ENCODE measurements at regions of chr6 and their contacts with region 1.

Region 1: GRCh38 chr6:28940858-28941680 is 17.3 kb upstream of the TRIM27 start:
- DNase-seq: peak; percentile 73
- H3K4me3 Mint-ChIP-seq: peak overlapping the region; percentile 95
- H3K27ac Mint-ChIP-seq: peak overlapping the region; percentile 97
- H3K4me1 Mint-ChIP-seq: peaks cover 59% of the 10 kb centered on the region
- H3K27me3 Mint-ChIP-seq: peaks cover 10% of the 10 kb centered on the region

Region 2: DNA sequence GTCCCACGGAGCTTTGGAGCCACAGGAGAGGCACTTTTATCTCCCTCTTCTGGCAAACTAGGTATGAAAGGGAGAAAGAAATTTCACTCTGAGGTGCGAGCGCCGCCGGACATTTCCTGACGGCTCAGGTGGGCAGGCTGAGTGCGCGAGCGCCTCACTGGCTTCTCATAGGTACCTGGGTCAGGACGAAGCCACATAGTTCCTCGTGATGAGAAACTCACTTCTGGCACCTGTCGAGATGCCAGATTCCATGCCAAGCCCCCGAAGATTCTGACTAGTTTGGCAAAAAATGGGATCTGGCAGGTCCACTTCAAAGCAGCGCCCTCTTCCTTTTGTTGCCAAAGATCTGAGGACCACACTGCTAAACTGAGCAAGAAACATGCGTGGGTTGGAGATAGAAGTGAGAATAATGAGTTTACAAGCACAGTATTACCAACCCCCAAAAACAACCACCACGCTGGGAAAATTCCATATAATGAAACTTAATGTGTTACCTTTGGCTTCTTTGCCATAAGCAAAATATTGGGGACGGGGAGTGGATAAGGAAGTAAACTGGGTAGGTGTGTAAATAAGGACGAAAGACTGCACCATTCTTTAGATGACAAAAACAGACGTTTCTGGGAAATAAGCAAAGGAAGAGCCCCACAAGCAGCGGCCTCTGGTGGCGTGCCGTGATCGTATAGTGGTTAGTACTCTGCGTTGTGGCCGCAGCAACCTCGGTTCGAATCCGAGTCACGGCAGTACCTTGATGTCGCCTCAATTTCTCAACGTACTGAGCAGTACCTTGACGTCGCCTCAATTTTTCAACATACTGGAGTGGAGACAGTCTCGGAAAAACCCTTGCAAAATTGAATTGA is 1783.4 kb before region 1 on chr6:
- intact Hi-C with region 1: loop called (anchors 5 kb)
- DNase-seq: peak; percentile 70
- H3K4me3 Mint-ChIP-seq: peak overlapping the region; percentile 77
- H3K27ac Mint-ChIP-seq: peak overlapping the region; percentile 80
- H3K4me1 Mint-ChIP-seq: peaks cover 47% of the 10 kb centered on the region
- H3K27me3 Mint-ChIP-seq: peaks cover 2% of the 10 kb centered on the region

Region 3: DNA sequence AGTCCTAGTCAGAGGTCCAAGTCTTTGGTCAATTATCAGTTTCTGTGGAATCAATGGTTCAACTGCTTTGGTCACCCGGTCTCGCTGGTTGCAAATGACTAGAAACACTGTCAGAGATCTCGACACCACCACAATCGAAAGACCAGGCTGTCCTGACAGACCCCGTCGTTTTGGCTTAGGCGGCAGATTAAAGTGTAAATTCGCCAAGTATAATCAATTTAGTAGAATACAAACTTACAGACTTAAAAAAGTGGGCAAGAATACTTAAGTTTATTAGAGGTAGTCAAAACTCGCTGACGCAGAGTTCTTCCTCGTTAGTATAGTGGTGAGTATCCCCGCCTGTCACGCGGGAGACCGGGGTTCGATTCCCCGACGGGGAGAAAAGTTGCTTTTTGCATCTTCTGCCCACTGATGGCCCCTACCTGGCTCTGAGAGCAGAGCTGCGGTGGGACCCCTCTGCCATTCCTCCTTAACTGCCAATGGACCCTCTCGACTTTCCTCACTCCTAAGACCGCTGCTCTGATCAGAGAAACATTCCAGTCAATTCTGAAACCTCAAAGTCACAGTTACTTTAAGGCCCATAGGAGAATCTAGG is 1437.5 kb before region 1 on chr6:
- intact Hi-C with region 1: loop called (anchors 5 kb)
- DNase-seq: peak; percentile 60
- H3K4me3 Mint-ChIP-seq: peak overlapping the region; percentile 90
- H3K27ac Mint-ChIP-seq: peak overlapping the region; percentile 82
- H3K4me1 Mint-ChIP-seq: peaks cover 32% of the 10 kb centered on the region
- H3K27me3 Mint-ChIP-seq: peaks cover 42% of the 10 kb centered on the region

Region 4: GRCh38 chr6:27902335-27903314 is 1038.4 kb before region 1 on chr6:
- intact Hi-C with region 1: loop called (anchors 1 kb)
- DNase-seq: peak; percentile 77
- H3K4me3 Mint-ChIP-seq: peak overlapping the region; percentile 79
- H3K27ac Mint-ChIP-seq: peak overlapping the region; percentile 95
- H3K4me1 Mint-ChIP-seq: peaks cover 24% of the 10 kb centered on the region
- H3K27me3 Mint-ChIP-seq: peaks cover 26% of the 10 kb centered on the region

Region 5: DNA sequence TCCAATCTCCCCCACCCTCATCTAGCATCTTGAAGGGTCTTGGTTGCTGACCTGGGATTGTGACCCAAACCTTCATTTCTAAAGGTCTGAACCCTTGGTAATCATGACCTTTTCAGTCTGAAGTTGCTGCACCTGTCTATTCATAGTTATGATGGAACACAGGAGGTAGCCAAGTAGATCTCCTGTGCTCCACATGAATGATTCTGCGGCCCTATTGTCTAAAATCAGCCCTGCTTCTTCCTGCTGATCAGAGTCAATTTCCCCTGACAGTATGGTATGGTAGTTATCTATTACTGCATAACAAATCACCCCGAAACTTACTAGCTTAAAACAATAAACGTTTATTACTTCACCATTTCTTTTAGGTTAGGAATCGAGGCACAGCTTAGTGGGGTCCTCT is 975.0 kb before region 1 on chr6:
- intact Hi-C with region 1: no loop called
- DNase-seq: no peak
- H3K4me3 Mint-ChIP-seq: no peak overlapping the region
- H3K27ac Mint-ChIP-seq: no peak overlapping the region
- H3K4me1 Mint-ChIP-seq: no peaks in the 10 kb centered on the region
- H3K27me3 Mint-ChIP-seq: peaks cover 4% of the 10 kb centered on the region

Region 6: DNA sequence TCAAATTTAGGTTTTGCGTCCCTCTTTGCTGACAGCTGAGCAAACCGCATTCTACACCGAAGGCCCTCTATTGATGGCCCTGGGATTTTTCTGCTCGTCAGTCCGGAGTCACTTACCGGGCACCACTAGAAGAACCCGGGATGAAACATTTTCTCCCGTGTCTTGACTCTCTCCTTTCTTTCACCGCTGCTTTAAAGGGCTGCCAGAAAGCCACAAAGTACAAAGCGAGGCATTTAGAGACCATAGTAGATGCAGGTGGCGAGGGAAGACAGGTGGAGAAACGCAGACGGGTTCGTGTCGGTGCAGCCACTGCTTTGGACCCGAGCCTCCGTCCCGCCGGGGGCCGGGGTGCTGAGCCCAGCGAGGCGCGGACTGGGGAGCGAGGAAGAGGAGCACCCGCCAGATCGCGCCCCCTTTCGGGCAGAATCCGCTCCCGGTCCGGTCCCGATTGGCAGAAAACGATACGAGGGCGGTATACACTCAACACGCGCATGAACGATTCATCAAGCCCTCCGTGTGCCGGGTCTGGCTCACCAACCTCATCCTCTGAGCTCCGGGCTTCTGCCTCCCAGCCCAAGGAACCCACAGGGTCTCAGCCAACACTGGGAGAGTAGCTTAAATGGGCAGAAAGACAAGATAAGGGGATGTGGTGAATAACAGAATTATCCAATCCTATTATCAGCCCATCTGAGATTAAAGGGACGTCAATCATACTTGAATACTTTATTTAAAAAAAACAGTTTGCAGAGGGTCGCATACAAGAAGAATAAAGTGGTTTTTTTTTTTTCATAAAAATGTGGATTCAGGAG is 102.2 kb before region 1 on chr6:
- intact Hi-C with region 1: loop called (anchors 1 kb)
- DNase-seq: peak; percentile 76
- H3K4me3 Mint-ChIP-seq: peak overlapping the region; percentile 96
- H3K27ac Mint-ChIP-seq: peak overlapping the region; percentile 93
- H3K4me1 Mint-ChIP-seq: peaks cover 19% of the 10 kb centered on the region
- H3K27me3 Mint-ChIP-seq: peaks cover 47% of the 10 kb centered on the region

Region 7: GRCh38 chr6:28895134-28895812 is 45.8 kb before region 1 on chr6:
- intact Hi-C with region 1: loop called (anchors 1 kb)
- DNase-seq: peak; percentile 89
- H3K4me3 Mint-ChIP-seq: peak overlapping the region; percentile 90
- H3K27ac Mint-ChIP-seq: peak overlapping the region; percentile 100
- H3K4me1 Mint-ChIP-seq: peaks cover 25% of the 10 kb centered on the region
- H3K27me3 Mint-ChIP-seq: peaks cover 6% of the 10 kb centered on the region

Region 8: DNA sequence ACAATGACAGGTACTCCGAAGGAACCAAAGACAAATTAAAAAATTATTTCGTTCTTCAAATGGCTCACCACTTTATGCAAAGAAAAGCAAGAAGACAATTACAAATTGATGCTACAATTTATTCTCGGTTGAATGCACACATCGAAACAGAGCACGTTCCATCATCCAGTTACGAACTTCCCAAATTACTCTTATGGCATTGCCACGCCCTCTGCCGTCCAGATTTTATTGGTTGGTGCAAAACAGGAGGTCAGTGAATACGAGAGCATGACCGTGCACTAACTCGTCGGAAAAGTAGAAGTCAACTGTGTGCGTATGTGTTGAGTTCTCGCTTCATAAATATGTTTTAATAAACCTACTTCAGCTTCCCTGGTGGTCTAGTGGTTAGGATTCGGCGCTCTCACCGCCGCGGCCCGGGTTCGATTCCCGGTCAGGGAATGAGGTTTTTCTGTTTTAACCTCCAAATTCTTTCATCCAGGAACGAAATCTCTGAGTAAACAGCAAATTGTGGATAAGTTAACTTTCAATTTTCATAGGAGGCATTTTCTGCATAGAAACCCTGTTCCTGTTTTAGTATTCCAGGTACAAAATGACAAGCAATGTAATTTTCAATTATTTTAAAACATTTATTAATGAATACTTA is 40.9 kb after region 1 on chr6:
- intact Hi-C with region 1: loop called (anchors 1 kb)
- DNase-seq: peak; percentile 59
- H3K4me3 Mint-ChIP-seq: peak overlapping the region; percentile 90
- H3K27ac Mint-ChIP-seq: peak overlapping the region; percentile 95
- H3K4me1 Mint-ChIP-seq: peaks cover 59% of the 10 kb centered on the region
- H3K27me3 Mint-ChIP-seq: peaks cover 22% of the 10 kb centered on the region

Region 9: DNA sequence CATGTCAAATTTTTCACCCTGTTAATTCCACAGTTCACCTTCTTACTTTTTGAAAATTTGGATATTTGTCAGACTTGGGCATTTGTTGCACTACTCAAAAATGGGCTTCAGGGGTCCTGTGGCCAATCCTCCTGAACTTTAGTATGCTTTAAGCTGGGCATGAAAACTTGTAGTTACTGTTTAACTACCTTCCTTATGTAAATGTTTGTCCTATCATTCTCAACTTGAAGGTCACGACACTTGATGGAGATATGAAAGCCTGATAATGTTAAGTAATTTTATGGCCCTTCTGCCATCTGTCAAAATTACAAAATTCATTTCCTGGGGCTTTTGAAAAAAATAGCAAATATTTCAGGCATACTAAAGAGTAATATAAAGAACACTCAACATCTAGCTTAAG is 68.3 kb after region 1 on chr6:
- intact Hi-C with region 1: no loop called
- DNase-seq: no peak
- H3K4me3 Mint-ChIP-seq: no peak overlapping the region
- H3K27ac Mint-ChIP-seq: no peak overlapping the region
- H3K4me1 Mint-ChIP-seq: peaks cover 40% of the 10 kb centered on the region
- H3K27me3 Mint-ChIP-seq: peaks cover 17% of the 10 kb centered on the region

Measured in activated T-helper 1 cell treated with anti-CD3 and anti-CD28 coated beads, Interleukin-12 subunit alpha, Interleukin-12 subunit beta, Interleukin-2, Interleukin-4 antibody, amounts not matched to agents 30 ng/mL and 10 ng/mL and 1 ng/mL, durations not matched to agents 14 hours and 24 hours and 36 hours (primary cell).